SK-N-SH (cell line): ENCODE measurements at regions of chr20 and their contacts with region 1.

Region 1: DNA sequence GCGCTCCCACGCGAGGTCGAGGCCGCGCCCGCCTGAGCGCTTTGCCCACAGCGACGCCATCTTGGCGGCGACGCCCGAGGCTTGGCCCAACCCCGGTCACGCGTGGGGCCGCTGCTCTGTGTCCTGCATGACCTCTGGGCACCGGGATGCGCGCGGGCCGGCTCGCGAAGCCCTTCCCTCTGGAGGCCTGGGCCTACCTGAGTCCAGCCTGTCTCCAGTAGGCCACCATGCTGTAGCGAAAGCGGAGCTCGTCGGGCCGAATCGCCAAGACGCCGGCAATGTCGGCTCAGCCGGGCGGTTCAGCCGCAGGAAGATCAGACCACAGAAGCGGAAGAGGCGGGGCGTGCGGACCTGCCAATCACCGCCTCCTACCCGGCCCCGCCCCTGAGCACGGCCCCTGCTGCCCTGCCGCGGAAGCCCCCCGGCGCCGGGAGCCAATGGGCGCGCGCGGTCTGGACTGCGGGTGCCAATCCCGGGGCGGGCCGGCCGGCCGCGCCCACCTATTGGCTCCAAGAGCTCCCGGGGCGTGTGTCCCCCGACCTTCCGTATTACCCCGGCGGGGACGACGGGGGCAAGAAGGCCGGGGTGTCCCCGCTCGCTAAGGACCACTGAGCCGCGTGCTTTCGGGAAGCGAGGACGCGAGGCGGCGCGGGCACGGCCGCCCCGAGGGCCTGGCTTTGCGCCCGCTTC is at the start of gene ATP5F1E:
- DNase-seq: peak; percentile 99
- H3K4me3 ChIP-seq: peak within 1 kb of the TSS; percentile 78 to 91
- H3K27ac ChIP-seq: peak within 1 kb of the TSS; percentile 82 to 91
- H3K4me1 ChIP-seq: peaks cover 30 to 41% of the 10 kb centered on the region in 2 experiments; a peak in 3 of 4 replicates
- H3K27me3 ChIP-seq: no peaks in the 10 kb centered on the region
- CTCF ChIP-seq: no peak
- EP300 ChIP-seq: 0 out of 4 replicates have a peak, but pooled peaks of 1 of the 2 experiments have one; percentile 1
- RAD21 ChIP-seq: peak; percentile 1; the same call in 1 of the 2 replicates
- polyA plus RNA-seq, gene ATP5F1E: 48.0 and 60.8 TPM in 2 replicates

Region 2: DNA sequence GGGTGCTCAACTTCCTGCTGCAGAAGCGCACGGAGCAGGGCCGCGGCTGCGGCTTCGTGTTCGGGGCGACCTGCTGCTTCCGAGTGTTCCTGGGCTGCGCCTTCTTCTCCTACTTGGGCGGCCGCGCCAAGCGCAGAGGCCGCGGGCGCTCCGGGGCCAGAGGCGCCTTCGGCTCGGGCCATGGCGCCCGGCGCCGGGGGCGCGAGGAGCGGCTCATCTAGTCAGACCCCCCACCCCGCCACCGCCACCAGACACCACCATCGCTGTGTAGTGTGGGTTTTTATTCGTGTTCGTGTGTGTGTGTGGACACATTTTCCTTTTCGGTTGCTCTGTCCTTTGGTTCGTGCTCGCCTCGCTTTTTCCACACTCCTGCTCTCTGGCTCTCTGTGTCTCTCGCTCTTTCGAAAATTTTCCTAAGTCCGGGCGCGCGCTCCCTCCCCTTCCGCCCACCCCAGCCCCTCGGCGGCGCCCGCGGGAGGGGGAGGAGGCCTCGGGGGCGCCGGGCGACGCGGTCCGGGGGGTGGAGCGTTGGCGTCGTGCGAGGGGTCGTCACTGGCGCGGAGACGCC is 141.6 kb before region 1 on chr20:
- CTCF ChIA-PET with region 1: no interaction called
- POLR2A ChIA-PET with region 1: interaction called, 11 read pairs
- DNase-seq: peak; percentile 96
- H3K4me3 ChIP-seq: peak overlapping the region; percentile 69 to 71
- H3K27ac ChIP-seq: peak overlapping the region; percentile 93 to 97
- H3K4me1 ChIP-seq: peaks cover 17 to 25% of the 10 kb centered on the region in 2 experiments; a peak in 3 of 4 replicates
- H3K27me3 ChIP-seq: no peaks in the 10 kb centered on the region
- CTCF ChIP-seq: no peak
- EP300 ChIP-seq: no peak
- RAD21 ChIP-seq: no peak

Region 3: GRCh38 chr20:58986968-58987517 is 45.1 kb before region 1 on chr20:
- CTCF ChIA-PET with region 1: no interaction called
- POLR2A ChIA-PET with region 1: interaction called, 11 read pairs
- DNase-seq: peak; percentile 81
- H3K4me3 ChIP-seq: no peak overlapping the region
- H3K27ac ChIP-seq: peak overlapping the region in 1 of 2 experiments; percentile 56; a peak in 2 of 4 replicates
- H3K4me1 ChIP-seq: peaks cover 9 to 53% of the 10 kb centered on the region in 2 experiments; a peak in 3 of 4 replicates
- H3K27me3 ChIP-seq: no peaks in the 10 kb centered on the region
- CTCF ChIP-seq: no peak
- EP300 ChIP-seq: peak in 1 of 2 experiments; percentile 65; a peak in 1 of 4 replicates
- RAD21 ChIP-seq: 0 out of 2 replicates have a peak, but pooled peaks have one; percentile 5

Region 4: DNA sequence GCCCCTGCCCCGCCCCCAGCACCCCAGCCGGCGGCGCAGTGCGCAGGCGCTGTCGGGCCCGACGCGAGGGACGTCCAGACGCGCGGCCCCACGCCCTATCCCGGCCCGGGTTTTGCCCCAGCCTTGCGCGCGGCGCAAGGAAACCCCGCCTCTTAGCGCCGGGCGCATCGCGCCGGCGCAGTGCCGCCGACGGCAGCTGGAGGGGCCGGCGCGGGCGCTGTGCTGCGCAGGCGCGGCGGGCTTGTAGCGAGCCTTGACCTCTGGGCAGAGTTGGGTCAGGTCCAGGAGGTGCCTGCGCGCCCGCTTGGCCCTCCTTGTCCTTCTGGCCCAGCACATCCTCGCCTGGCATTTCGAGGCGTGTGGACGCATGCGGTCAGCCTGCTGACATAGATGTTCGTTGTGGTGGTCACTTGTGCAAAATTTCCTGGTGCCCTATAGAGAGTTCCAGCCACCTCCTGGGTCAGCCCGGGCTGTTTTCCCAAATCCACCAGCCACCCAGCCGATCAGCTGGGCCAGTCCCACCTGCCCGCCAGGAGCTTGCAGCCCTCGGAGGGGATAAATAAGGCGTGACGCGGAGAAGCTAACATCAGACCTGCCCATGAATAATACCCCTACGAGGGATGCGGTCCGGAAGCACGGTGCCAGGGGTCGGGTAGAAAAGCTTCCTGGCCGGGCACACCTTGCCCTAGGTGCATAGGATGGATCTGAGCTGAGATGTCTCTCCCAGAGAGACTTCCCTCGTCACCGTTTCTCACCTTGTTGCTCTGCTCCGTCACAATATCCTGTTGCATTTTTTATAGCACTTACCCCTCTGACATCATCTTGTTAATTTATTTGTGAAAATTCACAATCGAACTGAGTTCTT is 10.9 kb after region 1 on chr20:
- CTCF ChIA-PET with region 1: interaction called, 6 read pairs
- POLR2A ChIA-PET with region 1: interaction called, 10 read pairs
- DNase-seq: peak; percentile 100
- H3K4me3 ChIP-seq: peak overlapping the region; percentile 75 to 89
- H3K27ac ChIP-seq: peak overlapping the region in 1 of 2 experiments; percentile 89; a peak in 3 of 4 replicates
- H3K4me1 ChIP-seq: peaks cover 7 to 30% of the 10 kb centered on the region in 2 experiments; a peak in 3 of 4 replicates
- H3K27me3 ChIP-seq: no peaks in the 10 kb centered on the region
- CTCF ChIP-seq: no peak
- EP300 ChIP-seq: no peak
- RAD21 ChIP-seq: no peak